Activated CD8-positive, alpha-beta T cell treated with anti-CD3 and anti-CD28 coated beads, Interleukin-2, amount 10 ng/mL, durations not matched to agents 7 days and 5 days (primary cell): ENCODE measurements at regions of chr14 and their contacts with region 1.

Region 1: GRCh38 chr14:20632682-20633428 is 8.6 kb downstream of the OR6S1 start:
- DNase-seq: peak; percentile 85
- ATAC-seq: peak; percentile 86
- H3K4me3 Mint-ChIP-seq: peak overlapping the region; percentile 72
- H3K27ac Mint-ChIP-seq: peak overlapping the region; percentile 79
- H3K4me1 Mint-ChIP-seq: peaks cover 37% of the 10 kb centered on the region
- H3K27me3 Mint-ChIP-seq: peaks cover 65% of the 10 kb centered on the region

Region 2: DNA sequence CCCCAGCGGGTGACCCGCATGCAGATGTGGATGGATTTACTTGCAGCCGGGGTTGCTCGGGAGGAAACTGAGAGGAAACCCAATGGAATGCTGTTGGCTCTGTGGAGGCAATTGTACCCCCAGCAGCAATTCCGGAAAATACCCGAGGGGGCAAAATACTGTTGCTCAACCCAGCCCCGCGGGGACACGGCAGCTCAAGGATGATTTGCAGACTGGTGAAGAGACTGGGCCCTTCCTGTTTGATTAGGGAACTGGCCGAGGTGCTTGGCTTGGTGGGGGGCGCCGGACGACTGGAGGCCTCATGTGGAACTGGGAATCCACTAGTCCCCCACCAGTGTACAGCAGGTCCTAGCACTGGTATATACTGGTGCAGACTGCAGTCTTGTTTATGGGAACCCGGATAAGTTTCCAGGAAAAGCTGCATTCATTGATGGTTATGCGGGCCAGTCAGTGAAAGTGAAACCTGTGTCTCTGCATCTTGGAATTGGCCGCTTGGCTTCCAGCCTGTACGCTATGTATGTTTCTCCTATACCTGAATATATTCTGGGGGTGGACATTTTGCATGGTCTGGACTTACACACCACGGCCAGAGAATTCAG is 31.3 kb before region 1 on chr14:
- CTCF ChIA-PET with region 1: no interaction called
- POLR2A ChIA-PET with region 1: no interaction called
- DNase-seq: no peak
- ATAC-seq: no peak
- H3K4me3 Mint-ChIP-seq: no peak overlapping the region
- H3K27ac Mint-ChIP-seq: no peak overlapping the region
- H3K4me1 Mint-ChIP-seq: no peaks in the 10 kb centered on the region
- H3K27me3 Mint-ChIP-seq: no peaks in the 10 kb centered on the region

Region 3: GRCh38 chr14:20682435-20683124 is 49.7 kb after region 1 on chr14:
- CTCF ChIA-PET with region 1: interaction called, 23 read pairs
- POLR2A ChIA-PET with region 1: interaction called, 3 read pairs
- DNase-seq: peak; percentile 83
- ATAC-seq: peak; percentile 60
- H3K4me3 Mint-ChIP-seq: no peak overlapping the region
- H3K27ac Mint-ChIP-seq: no peak overlapping the region
- H3K4me1 Mint-ChIP-seq: peaks cover 14% of the 10 kb centered on the region
- H3K27me3 Mint-ChIP-seq: no peaks in the 10 kb centered on the region

Region 4: GRCh38 chr14:20690848-20691523 is 58.1 kb after region 1 on chr14:
- CTCF ChIA-PET with region 1: interaction called, 13 read pairs
- POLR2A ChIA-PET with region 1: no interaction called
- DNase-seq: peak; percentile 61
- ATAC-seq: peak; percentile 81
- H3K4me3 Mint-ChIP-seq: no peak overlapping the region
- H3K27ac Mint-ChIP-seq: no peak overlapping the region
- H3K4me1 Mint-ChIP-seq: peaks cover 11% of the 10 kb centered on the region
- H3K27me3 Mint-ChIP-seq: no peaks in the 10 kb centered on the region